ENCODE measurements at regions of chr1 and their contacts with region 1.

Region 1: GRCh38 chr1:112501810-112502641 is 6.7 kb upstream of the WNT2B start:
- DNase-seq: peak; percentile 58 to 97 (median 81)

Region 2: GRCh38 chr1:112706908-112707663 is 205.1 kb after region 1 on chr1 and contains the start of gene RHOC:
- intact Hi-C with region 1: loop called (anchors 2 kb)
- DNase-seq: peak; percentile 52 to 97 (median 76)

Region 3: DNA sequence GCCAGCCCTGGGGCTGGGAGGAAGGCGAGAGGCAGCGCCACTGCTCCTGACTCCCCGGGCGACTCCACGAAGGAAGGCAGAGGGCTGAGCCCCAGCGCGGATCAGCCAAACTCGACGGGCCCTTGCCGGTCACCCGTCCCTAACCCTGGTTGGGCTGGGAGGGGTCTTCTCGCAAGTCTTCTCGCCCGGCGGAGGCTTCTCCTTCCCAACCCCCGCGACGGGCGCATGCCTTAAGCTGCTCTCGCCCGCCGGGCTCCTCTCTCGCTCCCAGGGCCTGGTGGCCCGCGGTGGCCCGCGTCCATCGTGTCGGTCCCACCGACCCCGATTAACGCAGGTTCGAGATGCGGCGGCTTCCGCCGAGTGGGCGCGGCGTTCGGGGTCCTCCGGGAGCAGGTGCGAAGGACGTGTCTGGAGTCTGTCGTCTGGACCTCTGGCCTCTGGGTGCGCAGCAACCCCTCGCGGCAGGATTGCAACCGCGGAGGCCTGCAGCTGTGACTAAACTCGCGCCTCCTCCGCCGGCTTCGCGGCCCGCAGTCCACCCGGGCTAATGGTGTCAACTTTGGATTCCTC is 242.1 kb after region 1 on chr1:
- intact Hi-C with region 1: no loop called
- DNase-seq: peak in 1 of 10 donors; percentile 71